Mammary epithelial cell (primary cell): ENCODE measurements at regions of chr1 and their contacts with region 1.

Region 1: DNA sequence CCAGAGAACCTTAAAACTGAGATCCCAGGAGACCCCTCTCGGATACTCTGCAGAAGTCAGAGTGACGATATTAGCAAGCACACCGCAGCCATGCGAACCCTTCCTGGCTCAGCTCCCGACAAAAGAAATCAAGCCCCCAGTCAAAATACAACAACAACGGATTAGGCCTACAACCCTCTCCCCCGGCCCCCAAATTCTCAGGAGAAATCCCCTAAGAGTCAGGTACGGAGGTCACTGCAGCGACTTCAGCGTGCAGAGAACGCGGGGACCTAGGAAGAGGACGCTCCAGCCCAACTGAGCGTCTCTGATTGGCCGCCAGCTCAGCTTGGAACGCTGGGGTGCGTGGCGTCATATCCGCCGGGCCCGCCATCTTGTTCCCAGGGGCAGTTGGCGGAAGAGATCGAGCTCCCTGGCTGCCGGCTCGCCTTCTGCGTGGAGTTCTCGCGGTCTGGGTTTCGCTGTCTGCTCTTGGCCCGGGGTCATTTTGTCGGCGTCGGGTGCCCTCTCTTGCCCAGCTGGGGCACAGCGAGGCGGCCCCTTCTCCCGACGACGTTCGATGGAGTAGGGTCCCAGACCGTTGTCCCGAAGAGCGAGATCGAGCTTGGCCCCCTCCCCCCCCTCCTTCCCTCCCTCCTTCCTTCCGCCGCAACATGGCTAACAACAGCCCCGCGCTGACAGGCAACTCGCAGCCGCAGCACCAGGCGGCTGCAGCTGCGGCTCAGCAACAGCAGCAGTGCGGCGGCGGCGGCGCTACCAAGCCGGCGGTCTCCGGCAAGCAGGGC is at the start of gene PRPF38B:
- DNase-seq: peak; percentile 88
- H3K4me3 ChIP-seq: peak within 1 kb of the TSS; percentile 87 to 96 (median 94)
- H3K27ac ChIP-seq: peak within 1 kb of the TSS; percentile 75
- H3K4me1 ChIP-seq: no peaks in the 10 kb centered on the region
- H3K27me3 ChIP-seq: no peaks in the 10 kb centered on the region
- CTCF ChIP-seq: no peak
- total RNA-seq, gene PRPF38B: 14.5 to 52.2 TPM

Region 2: DNA sequence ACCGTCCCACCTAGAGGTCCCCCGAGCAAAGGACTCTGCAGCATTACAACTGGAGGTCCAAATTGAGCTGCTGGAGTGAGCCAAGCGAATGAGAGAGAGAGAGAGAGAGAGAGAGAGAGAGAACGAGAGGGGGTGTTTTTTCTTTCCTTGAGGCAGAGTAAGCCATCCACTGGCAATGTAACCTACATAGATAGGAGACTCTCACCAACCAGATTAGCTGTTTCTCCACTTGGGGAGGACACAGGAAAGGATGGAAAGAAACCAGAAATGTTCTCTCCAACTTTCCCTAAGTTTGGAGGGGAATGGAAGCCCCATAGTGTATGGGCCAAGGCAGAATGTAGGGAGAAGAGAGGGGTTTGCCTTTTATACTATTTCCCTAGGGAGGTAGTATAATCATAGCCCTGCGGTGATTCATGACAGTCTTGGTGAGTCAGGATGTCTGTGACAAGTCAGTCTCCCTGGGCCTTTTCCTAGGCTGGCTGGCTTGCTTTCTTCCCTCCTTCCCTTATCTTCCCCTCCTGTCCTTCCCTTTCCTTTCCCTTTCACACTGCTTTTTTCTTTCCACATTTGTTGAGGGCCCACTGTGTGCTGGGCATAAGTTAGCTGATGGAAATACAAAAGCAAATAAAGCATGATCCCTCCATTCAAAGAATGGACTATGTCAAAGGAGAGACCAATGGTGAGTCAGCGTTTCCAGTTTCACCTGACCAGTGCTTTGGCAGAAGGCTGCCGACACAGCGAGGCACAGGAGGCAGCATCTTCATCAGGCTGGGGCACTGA is 27.7 kb after region 1 on chr1:
- CTCF ChIA-PET with region 1: no interaction called
- dilution Hi-C with region 1: no loop called
- in situ Hi-C with region 1: no loop called
- intact Hi-C with region 1: loop called (anchors 2 kb)
- DNase-seq: peak; percentile 89
- H3K4me3 ChIP-seq: no peak overlapping the region
- H3K27ac ChIP-seq: peak overlapping the region; percentile 82
- H3K4me1 ChIP-seq: peaks cover 37% of the 10 kb centered on the region
- H3K27me3 ChIP-seq: no peaks in the 10 kb centered on the region
- CTCF ChIP-seq: no peak

Region 3: GRCh38 chr1:108746372-108747205 is 54.5 kb after region 1 on chr1 and contains the start of gene STXBP3:
- CTCF ChIA-PET with region 1: no interaction called
- dilution Hi-C with region 1: no loop called
- in situ Hi-C with region 1: loop called in 1 of 2 experiments (anchors 10 kb)
- intact Hi-C with region 1: loop called (anchors 1 kb)
- DNase-seq: peak; percentile 95
- H3K4me3 ChIP-seq: peak within 1 kb of the TSS; percentile 75 to 89 (median 81)
- H3K27ac ChIP-seq: peak within 1 kb of the TSS; percentile 96
- H3K4me1 ChIP-seq: peaks cover 10% of the 10 kb centered on the region
- H3K27me3 ChIP-seq: no peaks in the 10 kb centered on the region
- CTCF ChIP-seq: peak; percentile 90 to 97
- total RNA-seq, gene STXBP3: 41.3 to 46.9 TPM

Region 4: GRCh38 chr1:108811611-108812010 is 119.5 kb after region 1 on chr1:
- CTCF ChIA-PET with region 1: no interaction called
- dilution Hi-C with region 1: no loop called
- in situ Hi-C with region 1: no loop called
- intact Hi-C with region 1: no loop called
- DNase-seq: no peak
- H3K4me3 ChIP-seq: no peak overlapping the region
- H3K27ac ChIP-seq: no peak overlapping the region
- H3K4me1 ChIP-seq: peaks cover 12% of the 10 kb centered on the region
- H3K27me3 ChIP-seq: no peaks in the 10 kb centered on the region
- CTCF ChIP-seq: no peak

Region 5: GRCh38 chr1:108828022-108828961 is 136.2 kb after region 1 on chr1:
- CTCF ChIA-PET with region 1: no interaction called
- dilution Hi-C with region 1: no loop called
- in situ Hi-C with region 1: no loop called
- intact Hi-C with region 1: loop called (anchors 5 kb)
- DNase-seq: peak; percentile 96
- H3K4me3 ChIP-seq: peak overlapping the region in 1 of 3 experiments; percentile 1
- H3K27ac ChIP-seq: peak overlapping the region; percentile 90
- H3K4me1 ChIP-seq: peaks cover 34% of the 10 kb centered on the region
- H3K27me3 ChIP-seq: no peaks in the 10 kb centered on the region
- CTCF ChIP-seq: peak; percentile 62 to 80

Region 6: DNA sequence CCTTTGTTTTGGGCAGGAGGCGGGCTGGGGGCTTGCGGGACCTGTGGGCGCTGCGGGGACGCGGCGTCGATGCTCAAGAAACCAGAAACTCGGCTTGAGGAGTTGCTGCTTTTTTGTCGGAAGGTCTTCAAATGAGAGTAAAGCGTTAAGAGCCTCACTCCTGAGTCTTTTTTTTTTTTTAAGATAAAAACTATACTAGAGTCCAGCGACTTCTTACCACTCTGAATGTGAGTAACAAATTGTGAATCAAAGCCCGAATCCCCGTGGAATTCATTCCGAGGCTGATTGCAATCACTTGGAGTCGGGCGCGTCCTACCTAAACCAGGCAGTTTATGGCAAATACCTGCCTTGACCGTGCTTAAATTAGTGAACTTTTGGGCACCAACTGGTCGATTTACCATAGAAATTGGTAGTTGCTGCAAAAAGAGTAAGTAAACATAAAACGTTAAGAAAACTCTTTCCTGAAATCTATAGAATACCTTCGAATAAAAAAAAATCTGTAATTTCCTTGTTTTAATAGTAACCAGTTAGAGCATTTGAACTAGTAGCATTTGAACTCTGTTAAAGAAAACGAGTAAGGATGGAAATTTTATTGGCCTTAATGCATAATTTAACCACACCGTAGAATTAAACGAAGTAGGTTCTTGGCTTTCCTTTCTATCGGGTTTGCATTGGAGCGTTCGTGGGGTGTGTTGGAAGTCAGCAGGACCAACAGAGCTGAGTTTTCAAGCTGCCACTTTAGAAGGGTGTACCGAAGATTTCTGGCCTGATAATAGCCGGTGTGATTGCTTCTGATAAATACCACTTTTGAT is 185.4 kb after region 1 on chr1:
- CTCF ChIA-PET with region 1: no interaction called
- dilution Hi-C with region 1: no loop called
- in situ Hi-C with region 1: no loop called
- intact Hi-C with region 1: loop called (anchors 5 kb)
- DNase-seq: peak; percentile 40
- H3K4me3 ChIP-seq: peak overlapping the region; percentile 74 to 97 (median 94)
- H3K27ac ChIP-seq: peak overlapping the region; percentile 81
- H3K4me1 ChIP-seq: peaks cover 31% of the 10 kb centered on the region
- H3K27me3 ChIP-seq: no peaks in the 10 kb centered on the region
- CTCF ChIP-seq: no peak